Gastrocnemius medialis (tissue), 4 donors: ENCODE measurements at regions of chr11 and their contacts with region 1.

Region 1: GRCh38 chr11:61733120-61733978 is 19.1 kb upstream of the MYRF start:
- DNase-seq: peak; percentile 79 to 86
- ATAC-seq: peak; percentile 81 to 82
- H3K4me3 ChIP-seq: no peak overlapping the region
- H3K27ac ChIP-seq: peak overlapping the region; percentile 81 to 90 (median 86)
- H3K4me1 ChIP-seq: peaks cover 12 to 16% of the 10 kb centered on the region in 2 donors
- H3K27me3 ChIP-seq: no peaks in the 10 kb centered on the region
- CTCF ChIP-seq: peak; percentile 97 to 100 (median 98)
- POLR2A ChIP-seq: no peak

Region 2: GRCh38 chr11:61477727-61478148 is 255.6 kb before region 1 on chr11:
- in situ Hi-C with region 1: no loop called
- intact Hi-C with region 1: loop called (anchors 5 kb)
- DNase-seq: peak in 1 of 2 donors; percentile 37
- ATAC-seq: no peak
- H3K4me3 ChIP-seq: no peak overlapping the region
- H3K27ac ChIP-seq: no peak overlapping the region
- H3K4me1 ChIP-seq: peaks cover 1 to 15% of the 10 kb centered on the region in 2 donors
- H3K27me3 ChIP-seq: peaks cover 0 to 6% (median 4%) of the 10 kb centered on the region in 3 donors
- CTCF ChIP-seq: peak; percentile 89 to 96 (median 91)
- POLR2A ChIP-seq: no peak

Region 3: GRCh38 chr11:61581030-61581928 is 152.1 kb before region 1 on chr11 and contains the start of gene SYT7:
- in situ Hi-C with region 1: no loop called
- intact Hi-C with region 1: loop called (anchors 2 kb)
- DNase-seq: peak; percentile 91 to 92
- ATAC-seq: peak; percentile 89 to 91
- H3K4me3 ChIP-seq: peak within 1 kb of the TSS; percentile 44 to 60 (median 56)
- H3K27ac ChIP-seq: peak within 1 kb of the TSS; percentile 64 to 77 (median 72)
- H3K4me1 ChIP-seq: peaks cover 4 to 5% of the 10 kb centered on the region in 2 donors
- H3K27me3 ChIP-seq: peaks cover 0 to 2% (median 0%) of the 10 kb centered on the region in 3 donors
- CTCF ChIP-seq: peak in 4 of 5 experiments; percentile 17 to 79 (median 62)
- POLR2A ChIP-seq: no peak
- total RNA-seq, gene SYT7: 0.68 to 4.9 (median 1.4) TPM

Region 4: DNA sequence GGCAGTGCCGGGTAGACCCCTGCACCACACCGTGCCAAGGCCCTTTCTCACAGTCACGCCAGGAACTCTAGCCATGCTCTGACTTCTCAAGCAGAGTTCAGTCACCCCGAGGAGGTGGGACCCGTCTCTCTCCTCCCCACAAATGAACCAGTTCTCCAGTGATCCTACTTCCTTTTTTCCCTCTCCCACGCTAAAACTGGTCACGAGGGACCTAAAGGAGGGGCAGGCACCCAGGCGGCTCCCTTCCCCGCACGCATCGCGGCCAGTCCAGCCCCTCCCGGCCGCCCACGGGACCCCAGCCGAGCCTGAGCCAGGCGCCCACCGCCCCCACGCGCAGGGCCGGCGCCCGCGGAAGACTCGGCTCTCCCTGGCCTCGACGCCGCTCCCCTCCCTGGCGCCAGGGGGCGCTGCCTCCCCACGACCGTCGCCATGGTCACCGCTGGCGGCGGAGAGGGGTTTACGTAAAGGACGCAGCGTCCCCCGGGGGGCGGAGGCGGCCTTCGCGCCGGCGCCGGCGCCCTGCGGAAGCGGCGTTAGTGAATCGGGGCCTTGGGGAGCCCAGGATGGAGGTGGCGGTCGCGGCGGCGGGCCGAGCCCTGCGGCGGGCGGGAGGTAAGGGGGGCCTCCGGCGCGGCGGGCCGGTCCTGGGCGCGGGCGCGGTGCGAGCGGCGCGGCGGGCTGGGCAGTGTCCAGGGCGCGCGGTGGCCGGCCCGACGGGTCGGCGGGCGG is 53.3 kb before region 1 on chr11 and contains the start of gene DAGLA:
- in situ Hi-C with region 1: loop called (anchors 5 to 10 kb)
- intact Hi-C with region 1: loop called (anchors 1 kb)
- DNase-seq: peak; percentile 48 to 52
- ATAC-seq: peak; percentile 66 to 70
- H3K4me3 ChIP-seq: peak within 1 kb of the TSS; percentile 46 to 62 (median 56)
- H3K27ac ChIP-seq: peak within 1 kb of the TSS in 3 of 4 donors; percentile 45 to 72 (median 61)
- H3K4me1 ChIP-seq: peaks cover 28 to 32% of the 10 kb centered on the region in 2 donors
- H3K27me3 ChIP-seq: no peaks in the 10 kb centered on the region
- CTCF ChIP-seq: peak; percentile 79 to 99 (median 97)
- POLR2A ChIP-seq: no peak
- total RNA-seq, gene DAGLA: 0.58 to 5.5 (median 2.9) TPM

Region 5: GRCh38 chr11:61695917-61696316 is 37.4 kb before region 1 on chr11:
- in situ Hi-C with region 1: no loop called
- intact Hi-C with region 1: loop called (anchors 5 kb)
- DNase-seq: peak; percentile 75 to 85
- ATAC-seq: peak; percentile 51 to 58
- H3K4me3 ChIP-seq: peak overlapping the region; percentile 20 to 50 (median 38)
- H3K27ac ChIP-seq: peak overlapping the region; percentile 84 to 97 (median 90)
- H3K4me1 ChIP-seq: peaks cover 73 to 80% of the 10 kb centered on the region in 2 donors
- H3K27me3 ChIP-seq: no peaks in the 10 kb centered on the region
- CTCF ChIP-seq: no peak
- POLR2A ChIP-seq: peak in 1 of 2 donors; percentile 27